Activated naive CD4-positive, alpha-beta T cell treated with anti-CD3 and anti-CD28 coated beads for 36 hours (primary cell): ENCODE measurements at regions of chr15 and their contacts with region 1.

Region 1: DNA sequence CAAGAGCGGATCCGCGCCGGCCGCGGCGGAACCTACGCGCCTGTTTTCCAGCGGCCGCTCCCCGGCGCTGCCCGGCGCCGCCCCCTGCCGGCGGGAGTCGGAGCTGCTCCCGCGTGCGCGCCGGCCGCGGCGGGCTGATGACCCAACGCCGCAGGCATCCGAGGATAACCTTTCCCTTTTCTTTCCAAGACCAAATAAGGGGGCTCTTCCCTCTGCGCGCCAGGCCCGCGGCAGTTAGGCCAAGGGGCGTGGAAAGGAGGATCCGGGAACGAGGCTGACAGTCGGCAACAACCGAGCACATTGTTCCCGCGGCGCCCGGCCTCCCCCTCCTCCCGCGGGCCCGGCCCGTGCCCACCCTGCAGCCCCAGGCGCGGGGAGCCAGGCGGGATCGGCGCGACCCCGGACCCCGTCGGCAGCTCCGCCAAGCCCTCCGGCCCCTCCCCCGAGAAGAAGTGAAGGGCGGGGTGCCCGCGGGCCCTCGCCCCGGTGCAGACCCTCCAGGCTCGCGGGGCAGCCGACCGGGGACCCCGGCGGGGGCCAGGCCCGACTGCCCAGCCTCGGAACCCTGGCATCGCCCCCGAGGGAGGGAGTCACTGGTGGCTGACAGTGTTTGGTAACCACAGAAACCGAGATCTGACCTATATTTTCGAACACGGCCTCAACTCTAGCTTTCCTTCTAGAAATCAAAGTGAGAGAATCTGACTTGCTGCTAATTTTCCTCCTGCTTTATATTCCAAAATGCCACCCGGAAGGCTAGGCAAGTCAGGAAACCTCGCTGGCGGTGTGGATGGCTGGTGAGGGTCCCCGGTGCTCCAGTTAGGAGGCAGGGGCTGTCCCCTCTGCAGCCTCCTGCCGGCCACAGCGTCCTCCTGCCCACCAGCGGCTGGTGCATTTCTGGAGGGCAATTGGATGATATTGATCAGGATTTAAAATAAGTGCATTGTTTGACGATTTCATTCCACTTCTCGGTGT is 45.6 kb upstream of the SYNM start:
- DNase-seq: peak; percentile 52
- H3K4me3 Mint-ChIP-seq: peak overlapping the region; percentile 70
- H3K27ac Mint-ChIP-seq: no peak overlapping the region
- H3K4me1 Mint-ChIP-seq: peaks cover 6% of the 10 kb centered on the region
- H3K27me3 Mint-ChIP-seq: peaks cover 33% of the 10 kb centered on the region

Region 2: DNA sequence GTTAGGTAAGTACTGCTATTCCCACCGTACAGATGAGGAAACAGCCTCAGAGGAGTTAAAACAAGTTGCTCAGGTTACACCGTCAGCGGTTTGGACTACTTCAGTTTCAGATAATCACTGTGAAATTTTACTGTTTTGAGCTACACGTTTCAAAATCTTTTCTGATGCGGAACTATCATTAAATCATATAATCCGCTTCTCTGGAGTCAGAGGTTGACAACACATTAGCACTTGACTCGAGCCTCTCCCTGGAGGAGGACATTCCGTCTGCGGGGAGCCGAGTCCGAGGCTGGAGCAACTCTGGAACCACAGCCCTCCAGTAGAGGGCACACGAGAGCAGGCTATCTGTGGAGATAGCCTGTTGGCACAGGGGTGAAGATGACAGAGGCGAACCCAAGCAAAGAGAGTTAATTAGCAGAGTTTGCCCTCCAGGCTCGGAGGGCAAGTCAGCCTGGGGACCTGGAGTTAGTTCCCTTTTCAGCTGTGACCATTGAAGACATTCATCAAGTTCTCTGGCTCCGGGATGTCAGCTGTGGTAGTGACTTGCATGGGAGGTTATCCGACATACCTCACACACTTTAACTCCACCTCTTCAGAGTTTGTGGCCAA is 279.7 kb before region 1 on chr15:
- CTCF ChIA-PET with region 1: interaction called, 3 read pairs
- intact Hi-C with region 1: loop called (anchors 2 kb)
- DNase-seq: peak; percentile 86
- H3K4me3 Mint-ChIP-seq: peak overlapping the region; percentile 51
- H3K27ac Mint-ChIP-seq: no peak overlapping the region
- H3K4me1 Mint-ChIP-seq: peaks cover 49% of the 10 kb centered on the region
- H3K27me3 Mint-ChIP-seq: no peaks in the 10 kb centered on the region

Region 3: DNA sequence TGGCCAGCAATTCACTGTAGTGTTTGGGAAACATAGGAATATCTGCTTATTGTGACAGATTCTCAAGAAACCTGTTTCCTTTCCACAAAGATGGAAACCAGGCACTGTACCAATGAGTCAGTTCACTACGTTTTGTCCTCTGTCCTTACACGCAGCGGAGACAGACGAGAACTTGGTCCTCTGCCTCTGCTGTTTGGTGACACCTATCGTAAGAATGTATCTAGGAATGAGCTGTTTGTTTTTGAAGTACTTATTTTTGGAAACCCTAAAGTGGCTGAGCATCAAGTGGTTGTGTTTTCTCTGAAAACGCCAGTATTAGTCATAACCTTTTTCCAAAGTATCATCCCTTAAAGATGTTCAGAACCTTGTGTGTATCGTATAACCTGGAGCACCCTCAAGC is 144.7 kb before region 1 on chr15:
- CTCF ChIA-PET with region 1: no interaction called
- intact Hi-C with region 1: loop called (anchors 10 kb)
- DNase-seq: peak; percentile 15
- H3K4me3 Mint-ChIP-seq: no peak overlapping the region
- H3K27ac Mint-ChIP-seq: no peak overlapping the region
- H3K4me1 Mint-ChIP-seq: peaks cover 15% of the 10 kb centered on the region
- H3K27me3 Mint-ChIP-seq: no peaks in the 10 kb centered on the region

Region 4: GRCh38 chr15:98927022-98927421 is 132.3 kb before region 1 on chr15:
- CTCF ChIA-PET with region 1: no interaction called
- intact Hi-C with region 1: no loop called
- DNase-seq: no peak
- H3K4me3 Mint-ChIP-seq: no peak overlapping the region
- H3K27ac Mint-ChIP-seq: no peak overlapping the region
- H3K4me1 Mint-ChIP-seq: no peaks in the 10 kb centered on the region
- H3K27me3 Mint-ChIP-seq: no peaks in the 10 kb centered on the region

Region 5: DNA sequence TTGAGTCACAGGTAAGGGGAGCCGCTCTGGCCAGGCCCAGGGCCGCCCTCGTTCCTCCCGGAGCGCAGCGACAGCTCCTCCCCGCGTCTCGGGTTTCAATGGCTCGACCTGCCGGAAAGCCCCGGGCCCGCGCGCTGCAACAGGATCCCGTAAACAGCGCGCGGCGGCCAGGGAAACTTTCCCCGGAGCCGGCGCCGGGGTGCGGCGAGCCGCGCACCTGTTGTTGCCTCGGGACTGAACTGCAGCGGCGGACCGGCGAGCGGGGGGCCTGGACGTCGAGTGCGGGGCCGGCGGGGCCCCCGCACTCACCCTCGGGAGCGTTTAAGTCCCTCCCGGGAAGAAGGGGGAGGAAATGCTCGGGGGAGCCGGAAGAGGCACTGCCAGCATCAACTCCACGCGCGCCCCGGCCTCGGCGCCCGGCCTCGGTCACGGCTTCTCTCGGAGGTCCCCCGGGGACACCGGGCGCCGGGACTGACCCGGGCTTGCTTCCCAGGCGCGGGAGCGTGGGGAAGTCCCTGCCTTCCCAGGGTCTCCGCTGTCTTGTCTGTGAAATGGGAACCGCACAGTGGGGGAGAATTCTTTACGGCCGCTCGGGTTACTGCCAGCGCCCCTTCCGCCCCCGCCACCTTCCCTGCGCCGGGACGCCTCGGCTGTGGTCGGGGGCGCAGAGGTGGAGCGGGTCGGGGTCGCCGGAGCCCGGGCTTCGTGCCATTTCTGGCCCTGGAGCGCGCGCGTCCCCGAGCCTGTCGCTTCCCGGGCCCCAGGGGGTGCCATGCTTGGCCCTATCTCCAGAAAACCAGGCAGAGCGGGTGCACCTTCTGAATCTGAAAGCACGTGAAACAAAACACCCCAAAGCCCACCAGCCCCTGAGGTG is 44.3 kb before region 1 on chr15:
- CTCF ChIA-PET with region 1: no interaction called
- intact Hi-C with region 1: loop called (anchors 2 kb)
- DNase-seq: peak; percentile 85
- H3K4me3 Mint-ChIP-seq: peak overlapping the region; percentile 64
- H3K27ac Mint-ChIP-seq: no peak overlapping the region
- H3K4me1 Mint-ChIP-seq: peaks cover 2% of the 10 kb centered on the region
- H3K27me3 Mint-ChIP-seq: peaks cover 33% of the 10 kb centered on the region

Region 6: DNA sequence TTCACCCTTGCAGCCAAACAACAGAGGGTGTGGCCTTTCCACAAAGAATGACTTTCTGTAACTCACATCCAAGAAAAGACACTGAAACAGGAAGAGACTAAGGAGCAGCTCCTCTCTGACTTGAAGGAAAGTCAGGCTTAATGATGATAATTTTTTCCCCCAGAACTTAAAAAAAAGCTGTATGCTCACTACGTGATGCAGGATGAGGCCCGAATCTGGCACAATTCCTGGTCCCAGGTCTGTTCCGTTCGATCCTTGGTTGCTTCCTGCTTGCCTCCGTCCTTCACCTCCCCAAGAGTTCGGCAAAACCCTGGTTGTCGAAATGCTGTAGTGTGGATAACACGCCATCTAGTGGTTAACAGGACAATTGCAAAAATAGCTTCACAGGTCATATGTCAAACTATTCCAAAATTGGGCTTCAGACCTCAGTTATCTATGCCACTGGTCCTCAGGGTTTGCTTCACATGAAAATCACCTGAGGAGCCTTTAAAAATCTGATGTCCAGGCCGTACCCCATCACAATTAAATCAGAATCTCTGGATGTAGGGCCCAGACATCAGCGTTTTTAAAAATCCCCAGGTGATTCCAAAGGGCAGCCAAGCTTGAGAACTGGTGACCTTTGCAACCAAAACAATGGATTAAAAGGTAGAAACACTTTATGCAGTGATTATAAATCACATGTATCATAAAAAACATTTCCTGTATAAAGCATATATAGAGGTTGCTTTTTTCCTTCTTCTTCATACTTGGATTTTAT is 17.4 kb after region 1 on chr15:
- CTCF ChIA-PET with region 1: interaction called, 41 read pairs
- intact Hi-C with region 1: no loop called
- DNase-seq: peak; percentile 61
- H3K4me3 Mint-ChIP-seq: peak overlapping the region; percentile 72
- H3K27ac Mint-ChIP-seq: no peak overlapping the region
- H3K4me1 Mint-ChIP-seq: peaks cover 7% of the 10 kb centered on the region
- H3K27me3 Mint-ChIP-seq: peaks cover 9% of the 10 kb centered on the region

Region 7: GRCh38 chr15:99592145-99592791 is 533.0 kb after region 1 on chr15:
- CTCF ChIA-PET with region 1: no interaction called
- intact Hi-C with region 1: no loop called
- DNase-seq: no peak
- H3K4me3 Mint-ChIP-seq: no peak overlapping the region
- H3K27ac Mint-ChIP-seq: no peak overlapping the region
- H3K4me1 Mint-ChIP-seq: peaks cover 42% of the 10 kb centered on the region
- H3K27me3 Mint-ChIP-seq: no peaks in the 10 kb centered on the region